ENCODE measurements at regions of chr17 and their contacts with region 1.

Region 1: GRCh38 chr17:35808962-35809854 is at the start of gene TAF15:
- DNase-seq: peak; percentile 96 to 98 (median 96)
- ATAC-seq: peak; percentile 97
- H3K4me3 ChIP-seq: peak within 1 kb of the TSS; percentile 84 to 93
- H3K27ac ChIP-seq: peak within 1 kb of the TSS; percentile 87 to 98 (median 94)
- H3K4me1 ChIP-seq: peaks cover 26% of the 10 kb centered on the region
- H3K27me3 ChIP-seq: no peaks in the 10 kb centered on the region
- CTCF ChIP-seq: peak; percentile 37 to 93 (median 82)
- POLR2A ChIP-seq: peak; percentile 99
- total RNA-seq, gene TAF15: 47.7 to 51.1 TPM

Region 2: DNA sequence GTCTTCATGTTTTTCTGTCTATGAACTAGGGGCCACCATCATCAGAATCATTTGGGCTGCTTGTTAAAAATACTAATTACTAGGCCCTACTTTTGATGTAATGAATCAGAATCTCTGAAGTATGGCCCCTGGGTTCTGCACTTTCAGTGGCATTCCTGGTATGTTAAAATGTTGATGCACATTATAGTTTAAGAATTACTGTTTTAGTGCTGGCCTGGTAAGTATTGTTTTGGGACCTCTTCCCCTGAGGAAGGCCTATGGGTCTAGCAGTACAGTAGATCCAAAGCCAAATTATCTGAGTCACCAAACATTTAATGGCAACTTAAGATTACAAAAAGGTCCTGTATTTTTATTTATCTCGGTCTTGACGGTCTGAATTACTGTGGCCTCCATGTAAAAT is 163.3 kb before region 1 on chr17:
- intact Hi-C with region 1: no loop called
- DNase-seq: no peak
- ATAC-seq: no peak
- H3K4me3 ChIP-seq: no peak overlapping the region
- H3K27ac ChIP-seq: no peak overlapping the region
- H3K4me1 ChIP-seq: no peaks in the 10 kb centered on the region
- H3K27me3 ChIP-seq: no peaks in the 10 kb centered on the region
- CTCF ChIP-seq: no peak
- POLR2A ChIP-seq: no peak

Region 3: GRCh38 chr17:35766903-35767510 is 42.2 kb before region 1 on chr17:
- intact Hi-C with region 1: loop called (anchors 5 kb)
- DNase-seq: peak; percentile 45 to 62 (median 52)
- ATAC-seq: no peak
- H3K4me3 ChIP-seq: no peak overlapping the region
- H3K27ac ChIP-seq: no peak overlapping the region
- H3K4me1 ChIP-seq: peaks cover 11% of the 10 kb centered on the region
- H3K27me3 ChIP-seq: no peaks in the 10 kb centered on the region
- CTCF ChIP-seq: peak; percentile 31 to 70 (median 56)
- POLR2A ChIP-seq: no peak

Measured in body of pancreas (tissue), 4 donors.